ENCODE measurements at regions of chr6 and their contacts with region 1.

Region 1: DNA sequence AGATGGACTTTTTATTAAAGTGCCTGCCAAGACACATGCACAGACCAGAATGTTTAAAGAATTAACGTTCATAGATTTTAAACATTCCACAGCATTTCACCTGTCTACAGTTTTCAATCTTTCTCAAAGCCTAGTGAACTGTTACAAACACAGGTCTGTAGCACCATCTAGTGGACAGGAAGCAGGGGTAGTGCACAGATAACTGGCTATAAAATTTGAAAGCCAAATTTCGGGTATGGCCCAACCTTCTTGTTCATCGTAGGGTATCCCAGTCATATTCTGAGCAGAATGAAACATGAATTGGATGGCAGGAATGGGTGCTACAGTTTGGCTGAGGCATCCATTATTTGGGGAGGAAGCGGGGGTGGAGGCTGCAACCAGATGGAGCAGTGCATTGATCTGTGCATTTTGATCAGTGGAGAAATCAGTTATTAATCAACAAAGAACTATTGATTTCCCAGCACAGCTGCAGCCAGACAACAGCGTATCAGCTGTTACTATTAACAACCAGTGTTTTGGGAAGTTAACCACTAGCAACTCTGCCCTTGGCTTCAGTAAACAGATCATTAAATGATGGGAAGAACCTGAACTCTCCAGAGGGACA is 56.1 kb upstream of the B3GAT2 start:
- DNase-seq: peak; percentile 51
- ATAC-seq: peak; percentile 80
- H3K4me3 ChIP-seq: no peak overlapping the region
- H3K27ac ChIP-seq: no peak overlapping the region
- H3K4me1 ChIP-seq: no peaks in the 10 kb centered on the region
- H3K27me3 ChIP-seq: peaks cover 6% of the 10 kb centered on the region
- CTCF ChIP-seq: peak; percentile 75
- POLR2A ChIP-seq: no peak
- RAD21 ChIP-seq: peak; percentile 71

Region 2: GRCh38 chr6:70304616-70305015 is 708.4 kb before region 1 on chr6:
- CTCF ChIA-PET with region 1: interaction called, 3 read pairs
- POLR2A ChIA-PET with region 1: no interaction called
- dilution Hi-C with region 1: no loop called
- in situ Hi-C with region 1: loop called (anchors 10 kb)
- intact Hi-C with region 1: no loop called
- DNase-seq: no peak
- ATAC-seq: no peak
- H3K4me3 ChIP-seq: no peak overlapping the region
- H3K27ac ChIP-seq: no peak overlapping the region
- H3K4me1 ChIP-seq: no peaks in the 10 kb centered on the region
- H3K27me3 ChIP-seq: peaks cover 25% of the 10 kb centered on the region
- CTCF ChIP-seq: no peak
- POLR2A ChIP-seq: no peak
- RAD21 ChIP-seq: no peak

Region 3: DNA sequence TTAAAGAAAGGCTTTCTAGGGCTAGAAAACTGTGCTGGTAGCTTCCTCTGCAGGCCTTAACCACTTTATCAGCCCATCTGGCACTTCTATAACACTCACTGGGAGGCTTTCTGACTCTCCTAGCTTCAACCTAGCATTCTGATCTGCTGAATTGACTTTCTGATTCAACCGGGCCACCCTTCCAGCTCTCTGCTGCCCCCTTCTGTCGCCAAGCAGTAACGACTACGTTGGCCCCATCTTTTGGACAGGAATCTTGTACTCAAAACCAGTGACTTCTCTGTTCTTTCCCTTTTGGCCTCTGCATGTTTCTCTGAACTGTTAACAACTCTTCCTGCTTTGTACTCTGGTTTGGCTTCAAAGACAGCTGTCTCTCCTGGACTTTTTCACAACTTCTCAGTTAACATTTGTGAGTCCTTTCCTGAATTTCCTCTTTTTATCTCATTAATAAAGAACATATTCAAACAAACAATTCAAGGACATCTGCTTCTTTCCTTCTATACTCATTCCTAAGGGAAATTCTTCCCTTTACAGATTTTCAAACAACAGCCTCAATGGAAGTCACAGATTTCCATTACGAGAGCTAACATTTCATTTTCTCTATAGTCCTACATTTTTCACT is 643.5 kb before region 1 on chr6:
- CTCF ChIA-PET with region 1: interaction called, 3 read pairs
- POLR2A ChIA-PET with region 1: no interaction called
- dilution Hi-C with region 1: no loop called
- in situ Hi-C with region 1: loop called (anchors 25 kb)
- intact Hi-C with region 1: loop called (anchors 2 kb)
- DNase-seq: peak; percentile 68
- ATAC-seq: peak; percentile 98
- H3K4me3 ChIP-seq: no peak overlapping the region
- H3K27ac ChIP-seq: no peak overlapping the region
- H3K4me1 ChIP-seq: no peaks in the 10 kb centered on the region
- H3K27me3 ChIP-seq: peaks cover 25% of the 10 kb centered on the region
- CTCF ChIP-seq: peak; percentile 91
- POLR2A ChIP-seq: no peak
- RAD21 ChIP-seq: peak; percentile 62

Region 4: DNA sequence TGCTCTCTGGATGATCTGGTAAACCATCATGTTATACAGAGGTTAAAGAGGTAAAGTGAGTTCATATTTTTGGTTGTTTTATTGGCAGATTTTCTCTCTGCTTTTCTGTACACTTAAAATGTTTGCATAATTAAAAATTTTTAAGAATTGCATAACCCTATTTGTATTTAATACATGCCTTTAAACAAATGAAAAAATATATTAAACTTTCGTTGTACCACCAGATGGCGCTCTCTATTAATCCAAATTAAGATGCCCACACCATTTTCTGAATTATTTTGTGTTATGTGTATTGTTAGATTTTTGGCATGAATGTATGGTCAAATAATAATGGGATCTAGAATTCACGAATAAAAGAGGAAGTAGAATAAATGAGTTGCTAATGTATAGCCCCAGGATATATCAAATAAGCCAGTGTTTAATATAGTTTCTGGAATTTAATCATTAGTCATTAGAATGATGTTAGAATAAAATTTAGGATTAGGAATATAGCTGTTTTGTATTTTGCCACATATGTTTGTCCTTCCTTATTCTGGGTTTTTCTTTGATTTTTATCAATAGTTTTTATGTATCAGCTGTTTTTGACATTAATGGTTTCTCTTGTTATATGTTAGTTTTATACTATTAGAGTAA is 306.4 kb before region 1 on chr6:
- CTCF ChIA-PET with region 1: no interaction called
- POLR2A ChIA-PET with region 1: no interaction called
- dilution Hi-C with region 1: no loop called
- in situ Hi-C with region 1: loop called (anchors 25 kb)
- intact Hi-C with region 1: loop called (anchors 2 kb)
- DNase-seq: peak; percentile 58
- ATAC-seq: peak; percentile 27; the same call in 1 of the 2 replicates
- H3K4me3 ChIP-seq: no peak overlapping the region
- H3K27ac ChIP-seq: no peak overlapping the region
- H3K4me1 ChIP-seq: no peaks in the 10 kb centered on the region
- H3K27me3 ChIP-seq: no peaks in the 10 kb centered on the region
- CTCF ChIP-seq: peak; percentile 71
- POLR2A ChIP-seq: no peak
- RAD21 ChIP-seq: peak; percentile 68

Region 5: DNA sequence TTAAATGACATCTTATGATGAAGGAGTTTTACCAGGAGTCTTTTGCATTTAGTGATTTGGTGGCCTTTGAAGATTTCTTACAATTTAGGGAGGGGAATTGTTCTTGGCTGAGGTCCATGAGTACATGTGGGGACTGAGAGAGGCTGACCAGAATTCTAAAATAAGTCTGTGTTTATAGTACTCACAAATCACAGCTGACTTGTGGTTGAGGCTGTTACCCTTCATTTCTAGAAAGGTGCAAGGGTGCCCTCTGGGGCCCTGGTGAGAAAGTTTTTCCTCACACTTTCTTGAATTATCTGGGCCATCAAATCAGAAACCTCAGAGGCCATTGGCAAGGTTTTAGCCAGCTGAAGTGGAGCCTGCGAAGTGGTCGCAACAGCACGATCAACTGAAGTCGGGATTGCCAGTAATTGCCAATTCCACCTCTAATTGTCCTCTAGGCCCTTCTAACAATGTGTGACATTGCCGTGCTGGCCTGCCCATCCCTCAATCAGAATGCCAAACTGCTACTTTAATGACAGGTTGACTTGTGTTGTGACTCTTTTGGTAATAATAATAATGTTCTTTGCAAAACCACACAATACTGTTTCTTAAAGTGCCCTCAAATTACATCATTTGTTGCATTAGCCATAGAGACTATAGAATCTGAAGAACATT is 497.2 kb after region 1 on chr6:
- CTCF ChIA-PET with region 1: no interaction called
- POLR2A ChIA-PET with region 1: no interaction called
- dilution Hi-C with region 1: no loop called
- in situ Hi-C with region 1: no loop called
- intact Hi-C with region 1: loop called (anchors 10 kb)
- DNase-seq: peak; percentile 84
- ATAC-seq: peak; percentile 86
- H3K4me3 ChIP-seq: no peak overlapping the region
- H3K27ac ChIP-seq: no peak overlapping the region
- H3K4me1 ChIP-seq: peaks cover 8% of the 10 kb centered on the region
- H3K27me3 ChIP-seq: no peaks in the 10 kb centered on the region
- CTCF ChIP-seq: peak; percentile 94
- POLR2A ChIP-seq: no peak
- RAD21 ChIP-seq: peak; percentile 96

Measured in IMR-90 (cell line).